Transverse colon (tissue), 4 donors: ENCODE measurements at regions of chr12 and their contacts with region 1.

Region 1: GRCh38 chr12:68223083-68223747 is 2.4 kb downstream of the IL26 start:
- DNase-seq: peak; percentile 82
- H3K4me3 ChIP-seq: no peak overlapping the region
- H3K27ac ChIP-seq: no peak overlapping the region
- H3K4me1 ChIP-seq: peaks cover 0 to 7% (median 1%) of the 10 kb centered on the region in 4 donors
- H3K27me3 ChIP-seq: peaks cover 11% of the 10 kb centered on the region
- CTCF ChIP-seq: peak; percentile 75 to 84 (median 78)
- EP300 ChIP-seq: no peak
- POLR2A ChIP-seq: no peak

Region 2: GRCh38 chr12:68100232-68100631 is 123.0 kb before region 1 on chr12:
- in situ Hi-C with region 1: no loop called
- intact Hi-C with region 1: no loop called
- DNase-seq: no peak
- H3K4me3 ChIP-seq: no peak overlapping the region
- H3K27ac ChIP-seq: no peak overlapping the region
- H3K4me1 ChIP-seq: no peaks in the 10 kb centered on the region
- H3K27me3 ChIP-seq: no peaks in the 10 kb centered on the region
- CTCF ChIP-seq: no peak
- EP300 ChIP-seq: no peak
- POLR2A ChIP-seq: no peak

Region 3: GRCh38 chr12:68310370-68310769 is 87.2 kb after region 1 on chr12:
- in situ Hi-C with region 1: loop called in 3 of 4 experiments (anchors 10 kb)
- intact Hi-C with region 1: loop called (anchors 5 kb)
- DNase-seq: no peak
- H3K4me3 ChIP-seq: no peak overlapping the region
- H3K27ac ChIP-seq: no peak overlapping the region
- H3K4me1 ChIP-seq: no peaks in the 10 kb centered on the region
- H3K27me3 ChIP-seq: no peaks in the 10 kb centered on the region
- CTCF ChIP-seq: no peak
- EP300 ChIP-seq: no peak
- POLR2A ChIP-seq: no peak

Region 4: DNA sequence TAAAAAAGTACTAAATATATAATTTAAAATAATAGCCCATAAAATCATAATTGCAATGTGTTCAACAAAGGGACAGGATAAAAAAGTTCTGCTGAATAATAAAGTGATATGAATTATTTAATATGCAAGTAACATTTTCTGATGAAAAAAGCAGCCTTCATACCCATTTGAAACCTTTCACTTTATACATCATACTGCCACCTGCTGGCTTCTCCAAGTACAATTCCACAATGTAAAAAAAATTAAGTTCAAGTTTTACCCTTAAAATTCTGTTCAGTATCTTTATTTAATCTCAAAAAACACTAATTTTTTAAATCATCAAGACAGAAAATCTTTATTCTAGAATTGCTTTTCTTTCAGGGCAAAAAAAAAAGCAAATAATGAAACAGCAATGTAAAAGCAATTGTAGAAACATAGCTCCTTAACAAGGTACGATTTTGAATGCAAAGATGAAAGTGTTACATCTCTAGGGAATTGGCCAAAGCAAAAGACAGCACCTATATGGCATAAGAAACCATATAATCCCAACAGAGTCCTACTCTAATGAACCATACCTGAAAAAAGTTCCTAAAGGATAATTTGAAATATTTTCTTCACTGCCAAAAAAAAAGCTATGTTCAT is 93.9 kb after region 1 on chr12:
- in situ Hi-C with region 1: loop called in 3 of 4 experiments (anchors 10 kb)
- intact Hi-C with region 1: loop called (anchors 5 kb)
- DNase-seq: peak; percentile 17
- H3K4me3 ChIP-seq: no peak overlapping the region
- H3K27ac ChIP-seq: peak overlapping the region in 1 of 4 donors; percentile 7
- H3K4me1 ChIP-seq: peaks cover 0 to 6% (median 0%) of the 10 kb centered on the region in 4 donors
- H3K27me3 ChIP-seq: no peaks in the 10 kb centered on the region
- CTCF ChIP-seq: peak; percentile 64 to 77 (median 69)
- EP300 ChIP-seq: no peak
- POLR2A ChIP-seq: no peak